MCF 10A (cell line): ENCODE measurements at regions of chr4 and their contacts with region 1.

Region 1: DNA sequence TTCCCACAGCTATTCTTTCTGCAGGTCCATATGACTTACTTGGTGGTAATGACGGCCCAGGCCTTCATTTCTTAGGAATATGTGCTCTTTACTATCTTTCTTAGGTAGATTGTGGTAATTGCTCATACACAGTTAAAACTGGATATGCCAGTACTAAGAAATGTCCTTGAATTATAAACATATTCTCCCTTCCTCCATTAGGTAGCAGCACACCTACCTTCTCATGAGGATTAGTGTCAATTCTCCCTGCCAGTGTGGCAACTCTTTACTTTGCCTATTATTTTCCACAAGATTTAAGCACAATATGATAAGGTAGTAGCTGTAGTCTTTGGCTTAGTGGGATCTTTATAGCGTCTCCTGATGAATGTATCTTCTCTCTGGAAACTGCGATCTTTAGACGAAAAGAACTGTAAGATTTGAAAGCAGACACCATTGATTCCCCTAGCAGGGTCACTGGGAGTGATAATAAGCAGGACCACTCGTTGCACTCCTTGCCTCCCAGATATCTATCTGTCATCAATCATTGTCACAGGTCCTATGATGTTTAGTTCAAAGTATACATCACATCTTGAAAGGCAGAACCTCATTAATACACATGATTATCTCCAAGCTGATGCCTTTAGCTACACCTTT is 1240.7 kb downstream of the C4orf33 start:
- DNase-seq: peak; percentile 58
- H3K4me3 Mint-ChIP-seq: no peak overlapping the region
- H3K27ac Mint-ChIP-seq: no peak overlapping the region
- H3K4me1 Mint-ChIP-seq: no peaks in the 10 kb centered on the region
- H3K27me3 Mint-ChIP-seq: no peaks in the 10 kb centered on the region
- CTCF ChIP-seq: peak; percentile 34

Region 2: GRCh38 chr4:129929052-129929451 is 407.6 kb before region 1 on chr4:
- CTCF ChIA-PET with region 1: interaction called, 10 read pairs
- POLR2A ChIA-PET with region 1: no interaction called
- intact Hi-C with region 1: loop called (anchors 5 kb)
- DNase-seq: peak; percentile 18
- H3K4me3 Mint-ChIP-seq: no peak overlapping the region
- H3K27ac Mint-ChIP-seq: no peak overlapping the region
- H3K4me1 Mint-ChIP-seq: no peaks in the 10 kb centered on the region
- H3K27me3 Mint-ChIP-seq: no peaks in the 10 kb centered on the region
- CTCF ChIP-seq: no peak

Region 3: GRCh38 chr4:130322439-130322838 is 14.3 kb before region 1 on chr4:
- CTCF ChIA-PET with region 1: interaction called, 11 read pairs
- POLR2A ChIA-PET with region 1: no interaction called
- intact Hi-C with region 1: no loop called
- DNase-seq: no peak
- H3K4me3 Mint-ChIP-seq: no peak overlapping the region
- H3K27ac Mint-ChIP-seq: no peak overlapping the region
- H3K4me1 Mint-ChIP-seq: no peaks in the 10 kb centered on the region
- H3K27me3 Mint-ChIP-seq: no peaks in the 10 kb centered on the region
- CTCF ChIP-seq: no peak

Region 4: GRCh38 chr4:130349745-130350144 is 13.0 kb after region 1 on chr4:
- CTCF ChIA-PET with region 1: interaction called, 29 read pairs
- POLR2A ChIA-PET with region 1: interaction called, 7 read pairs
- intact Hi-C with region 1: no loop called
- DNase-seq: no peak
- H3K4me3 Mint-ChIP-seq: no peak overlapping the region
- H3K27ac Mint-ChIP-seq: no peak overlapping the region
- H3K4me1 Mint-ChIP-seq: no peaks in the 10 kb centered on the region
- H3K27me3 Mint-ChIP-seq: no peaks in the 10 kb centered on the region
- CTCF ChIP-seq: no peak

Region 5: DNA sequence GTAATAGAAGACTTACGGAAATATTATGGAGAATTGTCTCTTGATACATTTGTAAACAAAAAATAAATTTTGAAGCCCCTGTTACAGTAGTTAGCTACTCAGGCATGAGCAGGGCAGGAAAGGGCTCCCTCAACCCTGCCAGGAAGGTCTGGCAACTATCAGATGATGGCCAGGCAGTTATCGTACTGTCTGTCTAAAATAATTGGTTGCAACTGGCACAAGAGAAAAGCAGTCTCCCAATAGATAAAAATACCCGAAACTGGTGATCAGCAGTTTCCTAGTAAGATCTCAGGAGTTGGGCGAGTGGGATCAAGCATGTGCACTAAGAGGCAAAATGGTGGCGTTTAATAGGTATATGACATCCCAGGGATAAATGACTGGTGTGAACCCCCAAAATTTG is 95.6 kb after region 1 on chr4:
- CTCF ChIA-PET with region 1: no interaction called
- POLR2A ChIA-PET with region 1: no interaction called
- intact Hi-C with region 1: no loop called
- DNase-seq: no peak
- H3K4me3 Mint-ChIP-seq: no peak overlapping the region
- H3K27ac Mint-ChIP-seq: no peak overlapping the region
- H3K4me1 Mint-ChIP-seq: no peaks in the 10 kb centered on the region
- H3K27me3 Mint-ChIP-seq: no peaks in the 10 kb centered on the region
- CTCF ChIP-seq: no peak